GM13977 (cell line): ENCODE measurements at regions of chr15 and their contacts with region 1.

Region 1: DNA sequence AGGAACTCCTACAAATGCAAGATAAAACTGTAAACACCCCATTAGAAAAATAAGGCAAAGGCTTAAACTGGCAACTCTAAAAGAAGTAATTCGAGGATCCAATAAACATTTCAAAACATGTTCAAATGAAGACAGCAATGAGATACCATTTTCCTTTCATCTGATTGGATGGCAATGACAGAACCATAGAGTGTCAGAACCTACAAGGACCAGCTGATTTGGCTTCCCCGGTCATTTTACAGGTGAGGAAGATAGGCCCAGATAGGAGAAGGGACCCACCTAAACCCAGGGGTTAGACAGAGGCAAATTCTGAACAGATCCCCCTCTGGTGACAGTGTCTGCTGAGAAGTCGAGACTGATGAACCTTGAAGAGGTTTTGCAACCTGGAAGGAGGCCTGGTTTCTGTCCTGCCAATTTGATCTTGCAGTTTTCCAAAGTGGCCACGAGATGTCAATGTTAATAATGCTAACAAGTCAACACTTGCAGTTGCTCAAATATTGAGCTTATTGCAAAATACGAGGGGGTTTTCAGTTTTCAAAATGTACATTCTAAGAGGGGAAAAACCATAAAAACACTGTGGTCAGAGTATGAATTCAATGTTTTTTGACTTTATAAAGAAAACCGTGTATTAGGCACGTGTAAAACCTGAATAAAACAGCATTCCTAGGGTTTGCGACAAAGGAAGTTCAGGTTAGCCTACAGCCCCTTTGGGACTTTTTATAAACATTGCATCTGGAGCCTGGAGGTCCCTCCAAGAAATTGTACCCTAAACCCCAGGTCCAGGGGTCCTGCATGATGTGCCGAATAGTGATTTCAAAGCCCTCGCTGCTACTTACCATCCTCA is 21.5 kb downstream of the CFAP161 start:
- DNase-seq: peak; percentile 57
- CTCF ChIP-seq: peak; percentile 70

Region 2: GRCh38 chr15:80934761-80935221 is 220.8 kb before region 1 on chr15:
- in situ Hi-C with region 1: no loop called
- DNase-seq: no peak
- CTCF ChIP-seq: no peak

Region 3: GRCh38 chr15:81265944-81266775 is 110.6 kb after region 1 on chr15:
- in situ Hi-C with region 1: loop called (anchors 10 kb)
- DNase-seq: peak; percentile 77
- CTCF ChIP-seq: peak; percentile 96